ENCODE measurements at regions of chr1 and their contacts with region 1.

Region 1: DNA sequence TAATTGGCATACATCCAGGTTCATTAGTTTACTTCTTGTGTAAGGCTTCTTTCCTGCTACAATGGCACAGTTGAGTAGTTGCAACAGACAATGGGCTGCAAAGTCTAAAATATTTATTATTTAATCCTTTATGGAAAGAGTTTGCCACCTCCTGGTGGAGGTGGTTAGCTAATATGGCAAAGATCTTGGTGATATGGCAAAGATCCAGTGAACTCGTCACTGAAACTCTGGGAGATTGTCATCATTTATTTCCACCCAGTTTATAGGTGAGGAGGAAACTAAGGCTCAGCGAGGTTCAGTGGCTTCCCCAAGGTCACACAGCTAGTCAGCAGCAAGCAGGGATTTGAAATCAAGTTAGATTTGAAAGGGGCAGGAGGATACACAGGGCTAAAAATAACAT is 16.1 kb upstream of the IFFO2 start:
- DNase-seq: no peak
- H3K4me3 ChIP-seq: no peak overlapping the region
- H3K27ac ChIP-seq: no peak overlapping the region
- H3K4me1 ChIP-seq: peaks cover 0 to 14% of the 10 kb centered on the region in 2 donors
- H3K27me3 ChIP-seq: no peaks in the 10 kb centered on the region
- CTCF ChIP-seq: peak in 5 of 6 experiments; percentile 30 to 45 (median 38)
- POLR2A ChIP-seq: no peak

Region 2: GRCh38 chr1:18902523-18903290 is 69.8 kb before region 1 on chr1 and contains the start of gene ALDH4A1:
- intact Hi-C with region 1: no loop called
- DNase-seq: peak; percentile 99
- H3K4me3 ChIP-seq: peak within 1 kb of the TSS; percentile 11 to 68 (median 37)
- H3K27ac ChIP-seq: peak within 1 kb of the TSS; percentile 81 to 95 (median 85)
- H3K4me1 ChIP-seq: peaks cover 9 to 13% of the 10 kb centered on the region in 2 donors
- H3K27me3 ChIP-seq: no peaks in the 10 kb centered on the region
- CTCF ChIP-seq: peak in 2 of 6 experiments; percentile 14 to 26
- POLR2A ChIP-seq: no peak
- total RNA-seq, gene ALDH4A1: 5.4 to 29.9 (median 18.6) TPM

Region 3: DNA sequence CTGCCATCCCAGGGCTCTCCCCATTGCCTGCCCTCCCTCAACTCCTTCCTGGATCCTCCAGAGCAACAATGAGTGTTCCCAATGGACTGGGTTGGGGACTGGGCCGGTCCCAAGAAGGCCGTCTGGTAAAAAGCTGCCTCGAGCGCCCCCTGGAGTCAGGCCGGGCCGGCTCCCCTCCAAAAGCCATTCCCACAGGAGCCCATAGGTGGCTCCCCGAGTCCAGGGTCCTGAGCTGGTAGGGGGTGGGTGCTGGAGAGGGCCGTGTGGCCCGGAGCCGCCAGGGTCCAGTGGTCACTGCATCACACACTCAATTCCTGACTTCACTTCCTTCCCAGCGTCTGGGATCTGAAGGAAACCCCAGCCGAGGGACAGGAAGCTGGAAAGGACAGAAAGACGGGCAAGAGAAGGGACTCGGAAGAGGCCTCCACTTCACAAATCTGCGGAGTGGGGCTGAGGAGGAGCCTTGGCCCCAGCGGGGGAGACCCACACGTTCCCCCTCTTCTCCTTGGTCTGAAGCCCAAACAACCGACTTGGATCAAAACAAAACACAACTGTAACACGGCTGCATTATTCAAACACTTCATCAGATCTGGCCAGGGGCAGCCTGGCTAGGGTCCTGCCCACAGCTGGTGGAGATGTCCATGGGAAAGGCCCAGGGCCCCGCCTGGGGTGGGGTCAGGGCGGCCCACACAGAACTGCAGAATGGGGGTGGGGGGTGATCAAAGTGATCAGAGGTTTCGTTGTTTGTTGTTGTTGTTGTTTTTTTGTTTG is 59.3 kb before region 1 on chr1:
- intact Hi-C with region 1: loop called (anchors 2 kb)
- DNase-seq: peak; percentile 92 to 95
- H3K4me3 ChIP-seq: peak overlapping the region in 1 of 3 donors; percentile 7
- H3K27ac ChIP-seq: peak overlapping the region; percentile 67 to 90 (median 90)
- H3K4me1 ChIP-seq: peaks cover 6 to 21% of the 10 kb centered on the region in 2 donors
- H3K27me3 ChIP-seq: no peaks in the 10 kb centered on the region
- CTCF ChIP-seq: peak; percentile 94 to 100 (median 100)
- POLR2A ChIP-seq: peak in 1 of 2 donors; percentile 48

Region 4: DNA sequence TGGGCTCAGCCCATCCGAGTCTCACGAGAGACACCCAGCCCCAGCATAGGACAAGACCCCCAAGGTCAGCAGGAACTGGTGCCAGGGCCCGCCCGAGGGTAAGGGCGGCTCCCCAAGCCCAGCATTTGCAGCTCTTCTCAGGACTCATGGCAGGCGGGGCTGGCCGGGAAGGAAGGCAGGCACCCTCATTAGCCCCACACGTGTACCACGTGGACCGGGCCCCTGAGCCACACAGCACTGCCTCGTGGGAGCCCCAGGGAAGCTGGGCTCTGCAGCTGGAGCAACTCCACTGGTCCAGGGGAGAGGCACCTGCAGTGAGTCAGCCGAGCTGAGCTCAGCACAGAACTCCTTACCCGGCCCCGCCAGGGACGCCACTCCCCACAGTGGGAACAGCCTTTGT is 81.7 kb after region 1 on chr1:
- intact Hi-C with region 1: no loop called
- DNase-seq: no peak
- H3K4me3 ChIP-seq: no peak overlapping the region
- H3K27ac ChIP-seq: peak overlapping the region in 2 of 3 donors; percentile 64 to 81
- H3K4me1 ChIP-seq: peaks cover 16 to 28% of the 10 kb centered on the region in 2 donors
- H3K27me3 ChIP-seq: no peaks in the 10 kb centered on the region
- CTCF ChIP-seq: no peak
- POLR2A ChIP-seq: no peak

Region 5: DNA sequence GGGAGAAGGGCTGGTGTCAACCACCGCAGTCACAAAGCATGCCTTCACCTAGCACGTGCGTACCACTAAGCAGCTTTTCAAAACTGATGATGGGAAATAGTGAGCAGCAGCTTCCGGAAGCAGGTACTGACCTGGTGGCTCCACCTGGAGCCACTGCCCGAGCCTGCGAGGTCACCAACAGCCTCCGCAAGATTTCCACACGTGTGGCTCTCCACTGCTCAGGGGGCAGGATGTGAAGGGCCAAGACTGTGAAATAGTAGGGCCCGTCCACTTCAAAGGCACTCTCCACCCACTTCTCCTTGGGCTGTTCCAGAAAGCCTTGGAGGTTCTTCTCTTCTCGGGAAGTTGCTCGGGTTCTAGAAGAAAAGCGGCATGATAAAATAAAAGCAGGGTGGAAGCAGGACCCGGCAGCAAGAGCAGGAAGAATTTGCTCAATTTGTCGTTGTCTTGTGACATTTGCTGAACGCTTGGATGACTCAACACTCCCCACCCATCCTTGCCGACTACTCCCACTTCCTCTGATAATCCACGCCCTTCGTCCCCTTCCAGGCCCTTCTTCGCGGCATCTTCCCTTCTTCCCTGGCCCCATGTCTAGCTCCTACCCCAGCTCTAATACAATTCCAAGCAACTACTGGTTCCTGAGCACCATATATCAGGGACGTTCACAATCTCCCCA is 108.8 kb after region 1 on chr1:
- intact Hi-C with region 1: loop called (anchors 10 kb)
- DNase-seq: no peak
- H3K4me3 ChIP-seq: no peak overlapping the region
- H3K27ac ChIP-seq: peak overlapping the region in 2 of 3 donors; percentile 27 to 54
- H3K4me1 ChIP-seq: peaks cover 23 to 36% of the 10 kb centered on the region in 2 donors
- H3K27me3 ChIP-seq: no peaks in the 10 kb centered on the region
- CTCF ChIP-seq: no peak
- POLR2A ChIP-seq: no peak

Measured in thyroid gland (tissue), 4 donors.